Panc1 (cell line): ENCODE measurements at regions of chrX and their contacts with region 1.

Region 1: DNA sequence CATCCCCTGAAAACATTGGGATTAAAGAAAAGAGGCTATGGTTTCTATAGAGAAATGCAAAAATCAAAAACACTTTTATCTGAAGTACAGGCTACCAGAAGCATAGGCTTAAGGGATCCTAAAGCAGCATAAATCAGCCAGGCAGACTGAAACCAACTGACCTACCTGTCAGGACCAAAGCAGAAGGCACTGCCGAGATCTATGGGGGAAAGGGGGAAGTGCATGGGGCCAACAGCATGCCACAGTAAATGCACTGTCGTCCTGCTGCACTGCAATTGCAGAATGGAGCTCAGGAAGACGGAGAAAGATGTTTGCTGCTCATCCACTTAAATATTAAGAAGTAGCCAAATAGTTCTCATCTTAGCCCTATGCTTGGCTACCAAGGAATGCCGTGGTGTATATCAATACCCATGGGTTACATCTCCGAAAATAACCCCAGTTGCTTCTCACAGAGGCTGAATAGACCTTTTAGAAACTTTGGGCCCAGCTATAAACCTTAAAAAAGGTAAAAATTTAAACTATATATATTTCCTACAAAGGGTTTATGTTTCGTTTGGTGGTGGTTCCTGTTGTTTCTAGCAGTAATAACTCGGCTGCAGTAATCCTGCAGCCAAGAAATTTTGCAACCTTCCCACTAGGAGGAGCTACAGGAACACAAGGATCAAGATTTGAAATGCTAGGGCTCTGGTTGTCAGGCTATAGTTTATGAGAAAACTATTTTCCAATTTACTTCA is 312.2 kb upstream of the DIAPH2 start:
- DNase-seq: no peak
- ATAC-seq: peak; percentile 69; the same call in 1 of the 2 replicates
- H3K4me3 ChIP-seq: no peak overlapping the region; a peak in 1 of 4 replicates
- H3K27ac ChIP-seq: no peak overlapping the region
- H3K4me1 ChIP-seq: no peaks in the 10 kb centered on the region; the same call in 1 of the 2 replicates
- H3K27me3 ChIP-seq: no peaks in the 10 kb centered on the region
- CTCF ChIP-seq: peak; percentile 75

Region 2: DNA sequence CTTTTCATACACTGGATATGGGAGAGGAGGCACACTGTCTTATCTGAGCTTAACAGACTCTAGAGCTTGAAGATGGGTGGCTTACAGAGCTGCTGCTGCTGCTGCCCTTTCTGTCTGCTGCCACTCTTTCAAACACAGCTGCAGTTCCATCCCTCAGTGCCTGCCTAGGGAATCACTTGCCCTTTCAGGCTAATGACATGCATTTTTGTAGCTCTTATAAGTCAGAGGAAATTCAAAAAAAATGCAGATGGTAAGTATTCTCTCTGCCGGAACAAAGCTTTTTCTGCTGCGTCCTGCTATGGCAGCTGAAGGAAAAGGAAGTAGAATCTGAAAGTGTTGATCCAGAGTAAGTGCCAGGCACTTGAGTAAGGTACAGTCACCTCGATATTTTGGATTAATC is 148.2 kb before region 1 on chrX:
- CTCF ChIA-PET with region 1: no interaction called
- POLR2A ChIA-PET with region 1: no interaction called
- in situ Hi-C with region 1: no loop called
- intact Hi-C with region 1: no loop called
- DNase-seq: no peak
- ATAC-seq: no peak
- H3K4me3 ChIP-seq: no peak overlapping the region
- H3K27ac ChIP-seq: no peak overlapping the region
- H3K4me1 ChIP-seq: no peaks in the 10 kb centered on the region
- H3K27me3 ChIP-seq: no peaks in the 10 kb centered on the region
- CTCF ChIP-seq: no peak

Region 3: DNA sequence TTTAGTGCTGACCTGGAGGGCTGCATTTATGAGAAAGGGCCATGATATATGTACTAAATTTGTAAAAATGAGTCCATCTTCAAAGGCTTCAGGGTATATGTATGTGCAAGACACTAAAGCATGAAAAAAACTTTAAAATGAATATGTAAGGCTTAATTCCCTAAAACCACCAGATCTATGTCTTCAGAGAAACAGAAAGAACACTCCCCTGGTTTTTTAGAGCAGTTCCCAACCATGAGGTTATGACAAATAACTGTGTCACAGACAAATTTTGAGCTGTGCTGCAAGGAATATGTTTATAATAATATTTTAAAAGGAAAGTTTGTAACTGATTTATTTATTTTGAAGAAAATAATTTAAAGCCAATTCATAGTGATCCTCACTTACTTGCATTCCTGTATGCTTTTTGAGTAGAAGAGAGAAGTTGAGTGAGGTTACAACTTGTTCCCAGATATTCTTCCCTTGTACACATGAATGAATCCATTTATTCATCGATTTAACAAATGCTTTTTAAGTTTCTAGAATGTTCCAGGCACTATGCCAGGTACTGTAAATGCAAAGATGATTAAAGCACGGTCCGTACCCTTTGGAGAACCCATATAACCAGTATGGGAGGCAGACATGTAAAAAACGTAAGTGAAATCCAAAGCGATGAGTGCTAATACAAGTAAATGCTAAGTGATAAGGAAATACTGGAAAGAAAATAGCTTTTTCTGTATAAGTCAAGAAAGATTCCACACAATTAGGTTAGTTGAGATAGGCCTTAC is 17.0 kb after region 1 on chrX:
- CTCF ChIA-PET with region 1: no interaction called
- POLR2A ChIA-PET with region 1: no interaction called
- in situ Hi-C with region 1: no loop called
- intact Hi-C with region 1: no loop called
- DNase-seq: no peak
- ATAC-seq: no peak
- H3K4me3 ChIP-seq: no peak overlapping the region
- H3K27ac ChIP-seq: no peak overlapping the region
- H3K4me1 ChIP-seq: no peaks in the 10 kb centered on the region
- H3K27me3 ChIP-seq: no peaks in the 10 kb centered on the region
- CTCF ChIP-seq: no peak

Region 4: DNA sequence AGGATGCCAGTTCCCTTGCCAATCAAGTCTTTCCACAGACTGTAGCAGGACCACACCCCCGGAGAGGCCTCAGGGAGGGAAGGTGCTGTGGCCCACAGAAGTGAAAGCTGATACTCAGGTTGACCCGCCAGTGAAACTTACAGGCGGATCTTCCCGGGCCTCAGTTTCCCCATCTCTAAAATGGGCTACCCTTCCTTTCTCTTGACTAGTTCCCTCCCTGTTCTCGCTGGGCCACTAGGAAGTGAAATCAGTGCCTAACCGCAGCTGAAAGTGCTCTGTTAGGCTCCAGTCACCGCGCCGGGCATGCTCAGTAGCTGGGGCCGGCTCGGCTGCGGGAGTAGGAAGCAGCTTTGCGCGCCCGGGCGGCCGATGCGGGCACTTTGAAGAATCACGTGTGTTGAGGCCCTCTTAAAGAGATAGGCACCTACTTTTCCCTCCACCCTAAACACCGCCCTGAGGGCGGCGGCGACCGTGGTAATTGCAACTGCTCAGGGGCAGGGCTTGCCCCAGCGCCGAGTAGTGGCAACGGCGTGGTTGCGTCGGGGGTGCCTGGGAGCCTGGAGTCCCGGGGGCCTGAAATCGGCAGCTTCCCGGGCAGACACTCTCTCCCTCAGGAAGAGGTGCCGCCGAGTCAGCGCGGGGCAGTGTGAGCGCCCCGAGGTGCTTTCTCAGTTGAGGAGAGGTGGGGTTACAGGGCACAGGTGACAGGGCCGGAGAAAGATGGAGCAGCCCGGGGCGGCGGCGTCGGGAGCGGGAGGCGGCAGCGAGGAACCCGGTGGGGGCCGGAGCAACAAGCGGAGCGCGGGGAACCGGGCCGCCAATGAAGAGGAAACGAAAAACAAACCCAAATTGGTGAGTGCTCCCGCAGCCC is 312.1 kb after region 1 on chrX and contains the start of gene DIAPH2:
- CTCF ChIA-PET with region 1: no interaction called
- POLR2A ChIA-PET with region 1: no interaction called
- in situ Hi-C with region 1: no loop called
- intact Hi-C with region 1: loop called (anchors 10 kb)
- DNase-seq: peak; percentile 38
- ATAC-seq: peak; percentile 97
- H3K4me3 ChIP-seq: peak within 1 kb of the TSS; percentile 76 to 88
- H3K27ac ChIP-seq: peak within 1 kb of the TSS; percentile 86
- H3K4me1 ChIP-seq: no peaks in the 10 kb centered on the region; the same call in 1 of the 2 replicates
- H3K27me3 ChIP-seq: no peaks in the 10 kb centered on the region
- CTCF ChIP-seq: no peak
- total RNA-seq, gene DIAPH2: 17.0 TPM

Region 5: GRCh38 chrX:96752781-96753180 is 380.3 kb after region 1 on chrX:
- CTCF ChIA-PET with region 1: no interaction called
- POLR2A ChIA-PET with region 1: no interaction called
- in situ Hi-C with region 1: no loop called
- intact Hi-C with region 1: loop called (anchors 10 kb)
- DNase-seq: no peak
- ATAC-seq: no peak
- H3K4me3 ChIP-seq: no peak overlapping the region
- H3K27ac ChIP-seq: no peak overlapping the region
- H3K4me1 ChIP-seq: no peaks in the 10 kb centered on the region
- H3K27me3 ChIP-seq: no peaks in the 10 kb centered on the region
- CTCF ChIP-seq: no peak